ENCODE measurements at regions of chr12 and their contacts with region 1.

Region 1: GRCh38 chr12:25301803-25302202 is 51.1 kb upstream of the KRAS start:
- DNase-seq: no peak
- ATAC-seq: no peak
- H3K4me3 Mint-ChIP-seq: no peak overlapping the region
- H3K27ac Mint-ChIP-seq: no peak overlapping the region
- H3K4me1 Mint-ChIP-seq: no peaks in the 10 kb centered on the region
- H3K27me3 Mint-ChIP-seq: no peaks in the 10 kb centered on the region
- CTCF ChIP-seq: no peak

Region 2: DNA sequence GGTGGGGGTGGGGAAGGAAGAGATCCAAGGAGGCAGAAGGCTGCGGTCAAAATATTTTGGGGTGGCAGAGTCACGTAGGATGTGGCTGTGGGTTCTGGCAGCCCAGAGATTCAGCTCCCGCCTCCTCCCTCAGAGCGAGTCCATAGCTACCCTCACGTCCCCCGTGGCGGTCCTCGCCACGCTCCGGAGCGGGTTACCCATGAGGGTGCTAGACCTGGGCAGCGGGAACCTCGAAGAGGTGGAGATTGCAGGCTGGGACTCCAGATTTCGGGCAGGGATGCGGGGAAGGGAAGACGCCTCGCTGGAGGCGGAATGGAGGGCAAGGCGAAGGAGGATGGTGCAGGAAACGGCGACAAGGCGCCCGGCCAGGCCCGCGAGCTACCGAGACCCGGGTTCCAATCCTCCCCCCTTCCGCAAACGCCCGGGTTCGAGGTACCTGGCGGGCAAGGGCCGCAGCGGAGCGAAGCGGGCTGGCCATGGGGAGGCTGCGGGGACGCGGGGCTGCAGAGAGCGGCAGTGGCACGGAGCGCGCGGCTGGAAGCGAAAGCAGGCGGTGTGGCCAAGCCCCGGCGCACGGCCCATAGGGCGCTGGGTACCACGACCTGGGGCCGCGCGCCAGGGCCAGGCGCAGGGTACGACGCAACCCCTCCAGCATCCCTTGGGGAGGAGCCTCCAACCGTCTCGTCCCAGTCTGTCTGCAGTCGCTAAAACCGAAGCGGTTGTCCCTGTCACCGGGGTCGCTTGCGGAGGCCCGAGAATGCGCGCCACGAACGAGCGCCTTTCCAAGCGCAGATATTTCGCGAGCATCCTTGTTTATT is 399.1 kb before region 1 on chr12:
- CTCF ChIA-PET with region 1: no interaction called
- POLR2A ChIA-PET with region 1: no interaction called
- intact Hi-C with region 1: no loop called
- DNase-seq: peak; percentile 26
- ATAC-seq: peak; percentile 40
- H3K4me3 Mint-ChIP-seq: peak overlapping the region; percentile 89
- H3K27ac Mint-ChIP-seq: no peak overlapping the region
- H3K4me1 Mint-ChIP-seq: peaks cover 23% of the 10 kb centered on the region
- H3K27me3 Mint-ChIP-seq: peaks cover 19% of the 10 kb centered on the region
- CTCF ChIP-seq: no peak

Region 3: GRCh38 chr12:25254271-25254880 is 47.4 kb before region 1 on chr12:
- CTCF ChIA-PET with region 1: no interaction called
- POLR2A ChIA-PET with region 1: no interaction called
- intact Hi-C with region 1: no loop called
- DNase-seq: no peak
- ATAC-seq: no peak
- H3K4me3 Mint-ChIP-seq: no peak overlapping the region
- H3K27ac Mint-ChIP-seq: peak overlapping the region; percentile 82
- H3K4me1 Mint-ChIP-seq: peaks cover 34% of the 10 kb centered on the region
- H3K27me3 Mint-ChIP-seq: no peaks in the 10 kb centered on the region
- CTCF ChIP-seq: no peak

Region 4: DNA sequence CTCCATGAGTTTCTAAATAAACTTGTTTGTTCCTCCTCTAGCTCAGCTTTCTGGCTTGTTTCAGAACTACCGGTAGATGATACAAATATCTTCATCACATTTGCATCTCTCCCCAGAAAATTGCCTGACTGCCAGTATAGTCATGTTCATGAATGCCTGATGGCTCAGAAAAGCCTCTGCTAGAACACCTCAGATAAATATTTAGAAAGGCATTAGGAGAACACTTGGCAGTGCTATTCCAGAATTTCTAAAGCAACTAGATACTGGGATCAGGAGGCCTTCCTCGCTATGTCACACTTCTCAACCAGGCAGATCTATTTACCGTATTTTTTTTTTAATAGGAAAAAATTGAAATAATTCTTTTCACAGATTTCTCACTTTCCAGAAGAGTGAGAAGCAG is 18.8 kb before region 1 on chr12:
- CTCF ChIA-PET with region 1: no interaction called
- POLR2A ChIA-PET with region 1: no interaction called
- intact Hi-C with region 1: loop called (anchors 2 kb)
- DNase-seq: no peak
- ATAC-seq: no peak
- H3K4me3 Mint-ChIP-seq: no peak overlapping the region
- H3K27ac Mint-ChIP-seq: no peak overlapping the region
- H3K4me1 Mint-ChIP-seq: peaks cover 5% of the 10 kb centered on the region
- H3K27me3 Mint-ChIP-seq: no peaks in the 10 kb centered on the region
- CTCF ChIP-seq: no peak

Region 5: DNA sequence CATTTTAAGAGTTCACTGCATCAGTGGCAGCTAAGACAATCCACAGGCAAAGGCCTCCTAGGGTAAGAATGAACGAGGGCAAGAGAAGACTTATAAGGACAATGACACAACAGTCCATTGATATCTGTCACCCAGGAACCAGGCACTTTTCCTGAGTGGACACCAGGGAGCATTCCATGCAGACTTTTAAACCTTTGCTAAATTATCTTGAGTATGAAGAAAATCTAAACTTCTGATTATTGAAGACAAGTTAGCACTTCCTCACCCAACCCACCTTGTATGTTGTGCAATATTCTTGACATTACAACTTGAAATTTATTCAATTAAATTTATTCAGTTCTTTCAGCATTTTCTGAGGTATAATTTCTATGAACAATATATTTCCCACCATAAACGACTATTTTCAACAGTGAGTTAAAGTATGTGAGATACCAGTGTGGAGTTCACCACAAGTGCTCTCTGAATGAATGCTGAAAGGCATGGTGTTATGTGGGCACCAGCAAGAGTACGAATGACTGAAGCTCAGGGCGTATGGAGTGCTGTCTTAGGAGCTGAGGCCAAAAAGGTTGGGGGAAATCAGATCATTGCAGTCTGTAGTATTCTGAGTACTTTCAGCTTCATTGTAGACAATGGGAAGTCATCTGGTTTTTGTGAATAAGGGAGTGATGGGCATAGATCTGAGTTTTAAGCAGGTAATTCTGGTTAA is 375.6 kb after region 1 on chr12:
- CTCF ChIA-PET with region 1: no interaction called
- POLR2A ChIA-PET with region 1: no interaction called
- intact Hi-C with region 1: no loop called
- DNase-seq: no peak
- ATAC-seq: no peak
- H3K4me3 Mint-ChIP-seq: no peak overlapping the region
- H3K27ac Mint-ChIP-seq: no peak overlapping the region
- H3K4me1 Mint-ChIP-seq: no peaks in the 10 kb centered on the region
- H3K27me3 Mint-ChIP-seq: peaks cover 3% of the 10 kb centered on the region
- CTCF ChIP-seq: no peak